ENCODE measurements at regions of chr22 and their contacts with region 1.

Region 1: GRCh38 chr22:40463017-40463631 is 92.7 kb downstream of the SGSM3 start:
- DNase-seq: no peak

Region 2: DNA sequence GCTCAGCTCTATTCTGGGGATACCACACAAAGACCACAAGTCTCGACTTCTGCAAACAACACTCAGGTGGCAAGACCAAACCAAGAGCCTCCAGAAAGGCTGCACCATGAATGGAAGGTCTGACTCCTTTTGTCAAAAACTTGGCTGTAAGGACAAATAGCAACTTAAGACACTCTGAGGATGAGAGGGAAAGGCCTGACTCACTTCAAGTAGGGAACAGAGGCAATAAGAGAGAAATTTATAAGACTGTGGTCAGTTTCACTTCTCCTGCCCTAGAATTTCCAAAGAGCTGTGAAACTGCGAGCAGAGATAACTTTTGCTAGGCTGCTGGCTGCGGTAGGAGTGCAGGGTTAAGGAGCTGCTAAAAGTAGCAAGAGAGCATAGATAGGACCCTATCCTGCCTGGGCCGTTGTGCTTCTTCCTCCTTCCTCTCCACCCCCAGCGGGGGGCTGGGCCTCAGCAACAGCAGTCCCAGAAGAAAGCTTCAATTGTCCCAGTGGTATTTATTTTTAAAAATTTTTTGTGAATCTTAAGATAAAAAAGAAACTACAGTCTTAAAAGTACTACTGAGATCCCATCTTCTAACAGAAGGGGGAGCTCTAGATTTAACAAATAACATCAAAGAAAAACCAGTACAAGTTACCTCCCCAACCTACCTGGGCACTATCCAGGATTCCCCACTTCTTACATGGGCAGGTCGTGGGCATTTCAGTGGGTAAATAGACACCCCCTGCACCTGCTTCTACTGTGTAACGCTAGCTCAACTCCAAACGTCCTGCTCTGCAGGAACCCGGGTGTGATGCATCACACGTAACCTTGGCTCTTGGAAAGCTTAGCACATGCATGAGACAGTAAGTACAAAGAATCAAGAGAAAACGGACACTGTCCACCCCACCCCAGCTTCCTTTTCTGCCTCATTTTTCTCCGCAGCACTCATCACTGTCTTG is 26.3 kb before region 1 on chr22:
- intact Hi-C with region 1: loop called in 1 of 2 experiments (anchors 1 kb)
- DNase-seq: no peak

Measured in posterior vena cava (tissue), 2 donors.